ENCODE measurements at regions of chr15 and their contacts with region 1.

Region 1: GRCh38 chr15:51524376-51524775 is 98.2 kb downstream of the DMXL2 start:
- DNase-seq: no peak
- H3K4me3 ChIP-seq: no peak overlapping the region
- H3K27ac ChIP-seq: no peak overlapping the region
- H3K4me1 ChIP-seq: no peaks in the 10 kb centered on the region
- H3K27me3 ChIP-seq: no peaks in the 10 kb centered on the region
- CTCF ChIP-seq: no peak
- EP300 ChIP-seq: no peak
- POLR2A ChIP-seq: no peak
- RAD21 ChIP-seq: no peak

Region 2: DNA sequence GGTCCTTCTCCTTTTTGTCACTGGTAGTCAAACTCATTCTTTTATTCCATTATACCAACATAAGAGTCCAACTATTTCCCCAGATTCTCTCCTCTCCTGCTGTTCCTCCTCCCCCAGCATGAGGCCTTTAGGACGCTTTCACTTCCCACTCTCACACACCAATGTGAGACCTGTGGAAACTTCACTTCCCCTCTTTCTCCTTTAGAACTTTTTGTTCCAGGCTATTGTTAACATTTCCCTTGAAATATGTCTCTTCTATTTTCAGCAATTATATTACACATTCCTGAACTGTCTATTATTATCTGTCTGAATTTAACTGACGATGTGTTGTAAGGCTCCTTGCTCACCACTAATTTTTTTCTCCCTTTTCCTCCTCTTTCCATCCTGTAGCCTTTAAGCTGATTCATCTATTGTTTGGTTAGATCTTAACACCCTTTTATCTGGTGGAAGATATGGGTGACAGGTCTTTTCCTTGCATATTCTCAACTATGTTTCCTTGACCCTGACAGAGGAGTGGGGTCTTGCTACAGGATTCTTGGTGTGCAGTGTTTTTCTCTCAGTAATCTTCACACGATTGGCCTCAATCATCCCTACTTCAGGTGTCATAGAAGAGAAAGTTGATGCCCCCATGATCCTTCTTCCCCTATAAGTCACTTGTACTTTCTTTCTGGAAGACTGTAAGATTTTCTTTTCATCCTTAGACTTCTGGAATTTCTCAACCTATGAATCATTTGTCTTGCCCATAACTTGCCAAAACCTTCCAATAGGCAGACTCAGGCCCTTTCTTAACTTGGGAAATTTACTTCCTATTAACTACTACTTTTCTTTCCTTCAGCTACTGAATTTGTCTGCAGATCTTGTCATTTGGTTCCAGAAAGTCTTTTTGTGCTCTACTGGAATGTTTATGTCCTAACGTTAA is 191.9 kb before region 1 on chr15:
- CTCF ChIA-PET with region 1: no interaction called
- POLR2A ChIA-PET with region 1: no interaction called
- DNase-seq: no peak
- H3K4me3 ChIP-seq: no peak overlapping the region
- H3K27ac ChIP-seq: no peak overlapping the region
- H3K4me1 ChIP-seq: no peaks in the 10 kb centered on the region
- H3K27me3 ChIP-seq: no peaks in the 10 kb centered on the region; a peak in 1 of 7 replicates
- CTCF ChIP-seq: no peak
- EP300 ChIP-seq: no peak
- POLR2A ChIP-seq: no peak
- RAD21 ChIP-seq: no peak

Region 3: GRCh38 chr15:51499379-51499976 is 24.9 kb before region 1 on chr15:
- CTCF ChIA-PET with region 1: interaction called, 11 read pairs
- POLR2A ChIA-PET with region 1: no interaction called
- DNase-seq: no peak
- H3K4me3 ChIP-seq: no peak overlapping the region
- H3K27ac ChIP-seq: no peak overlapping the region
- H3K4me1 ChIP-seq: no peaks in the 10 kb centered on the region
- H3K27me3 ChIP-seq: no peaks in the 10 kb centered on the region
- CTCF ChIP-seq: peak in 2 of 3 experiments; percentile 63 to 85; a peak in 3 of 4 replicates
- EP300 ChIP-seq: no peak
- POLR2A ChIP-seq: no peak
- RAD21 ChIP-seq: peak; percentile 81 to 83

Region 4: GRCh38 chr15:51536965-51537574 is 12.7 kb after region 1 on chr15:
- CTCF ChIA-PET with region 1: interaction called, 10 read pairs
- POLR2A ChIA-PET with region 1: no interaction called
- DNase-seq: no peak
- H3K4me3 ChIP-seq: no peak overlapping the region
- H3K27ac ChIP-seq: no peak overlapping the region
- H3K4me1 ChIP-seq: no peaks in the 10 kb centered on the region
- H3K27me3 ChIP-seq: no peaks in the 10 kb centered on the region
- CTCF ChIP-seq: peak in 2 of 3 experiments; percentile 46 to 66; a peak in 3 of 4 replicates
- EP300 ChIP-seq: no peak
- POLR2A ChIP-seq: no peak
- RAD21 ChIP-seq: peak; percentile 18 to 26; a peak in 2 of 4 replicates

Measured in H1 (cell line).